B cell (primary cell): ENCODE measurements at regions of chr3 and their contacts with region 1.

Region 1: DNA sequence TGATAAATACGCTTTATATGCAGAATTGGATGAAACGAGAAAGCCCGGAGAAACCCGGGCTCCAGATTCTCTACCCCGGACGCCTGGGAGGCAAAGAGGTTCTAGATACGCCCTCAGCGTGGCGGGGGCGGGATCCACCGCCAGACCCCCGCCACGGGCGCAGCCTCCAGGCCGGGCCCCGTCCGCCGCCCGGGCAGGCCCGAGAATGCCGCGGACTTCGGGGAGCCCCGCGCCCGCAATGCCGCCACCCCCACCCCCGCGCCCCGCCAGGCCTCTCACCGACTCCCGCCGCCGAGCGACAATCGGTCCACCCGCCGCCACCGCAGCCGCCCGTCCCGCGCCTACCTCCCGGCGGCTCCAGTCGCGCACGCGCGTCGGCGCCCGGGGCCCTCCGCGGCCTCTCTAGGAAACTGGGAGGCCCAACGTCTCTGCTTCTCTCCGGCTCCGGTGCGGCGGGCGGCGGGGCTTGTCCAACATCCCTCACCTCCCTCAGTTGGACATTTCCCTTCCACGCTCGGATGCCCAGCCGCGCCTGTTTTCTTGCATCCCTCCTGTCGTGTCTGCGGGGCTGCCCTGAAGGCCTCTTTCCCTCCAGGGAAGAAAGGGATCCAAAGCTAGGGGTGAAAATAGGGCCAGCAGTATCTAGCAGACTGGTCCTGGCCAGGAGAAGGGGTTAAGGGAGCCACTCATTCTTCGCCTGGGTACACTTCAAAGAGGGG is at the start of gene ZNF445:
- DNase-seq: peak; percentile 85
- ATAC-seq: peak; percentile 91
- H3K4me3 ChIP-seq: peak within 1 kb of the TSS; percentile 47 to 90 (median 69)
- H3K4me3 Mint-ChIP-seq: peak within 1 kb of the TSS; percentile 94
- H3K27ac ChIP-seq: peak within 1 kb of the TSS in 1 of 2 donors; percentile 44
- H3K27ac Mint-ChIP-seq: peak within 1 kb of the TSS; percentile 89
- H3K4me1 ChIP-seq: peaks cover 11 to 18% of the 10 kb centered on the region in 2 donors
- H3K4me1 Mint-ChIP-seq: peaks cover 34% of the 10 kb centered on the region
- H3K27me3 ChIP-seq: no peaks in the 10 kb centered on the region
- H3K27me3 Mint-ChIP-seq: no peaks in the 10 kb centered on the region
- CTCF ChIP-seq: no peak
- total RNA-seq, gene ZNF445: 28.1 and 29.7 TPM in 2 replicates

Region 2: GRCh38 chr3:44338010-44338827 is 139.3 kb before region 1 on chr3 and contains the start of gene TCAIM:
- CTCF ChIA-PET with region 1: interaction called, 3 read pairs
- POLR2A ChIA-PET with region 1: no interaction called
- intact Hi-C with region 1: loop called (anchors 1 kb)
- DNase-seq: peak; percentile 100
- ATAC-seq: peak; percentile 90
- H3K4me3 ChIP-seq: peak within 1 kb of the TSS; percentile 85 to 97 (median 87)
- H3K4me3 Mint-ChIP-seq: peak within 1 kb of the TSS; percentile 99
- H3K27ac ChIP-seq: peak within 1 kb of the TSS; percentile 80 to 88
- H3K27ac Mint-ChIP-seq: peak within 1 kb of the TSS; percentile 99
- H3K4me1 ChIP-seq: peaks cover 16 to 19% of the 10 kb centered on the region in 2 donors
- H3K4me1 Mint-ChIP-seq: peaks cover 29% of the 10 kb centered on the region
- H3K27me3 ChIP-seq: no peaks in the 10 kb centered on the region
- H3K27me3 Mint-ChIP-seq: peaks cover 9% of the 10 kb centered on the region
- CTCF ChIP-seq: no peak
- total RNA-seq, gene TCAIM: 15.8 and 16.7 TPM in 2 replicates

Region 3: GRCh38 chr3:44439499-44440295 is 37.8 kb before region 1 on chr3:
- CTCF ChIA-PET with region 1: no interaction called
- POLR2A ChIA-PET with region 1: no interaction called
- intact Hi-C with region 1: loop called (anchors 2 kb)
- DNase-seq: peak; percentile 82
- ATAC-seq: peak; percentile 92
- H3K4me3 ChIP-seq: peak overlapping the region in 2 of 5 experiments; percentile 39 to 48
- H3K4me3 Mint-ChIP-seq: peak overlapping the region; percentile 68
- H3K27ac ChIP-seq: peak overlapping the region; percentile 62 to 84
- H3K27ac Mint-ChIP-seq: peak overlapping the region; percentile 83
- H3K4me1 ChIP-seq: peaks cover 17 to 20% of the 10 kb centered on the region in 2 donors
- H3K4me1 Mint-ChIP-seq: peaks cover 20% of the 10 kb centered on the region
- H3K27me3 ChIP-seq: no peaks in the 10 kb centered on the region
- H3K27me3 Mint-ChIP-seq: no peaks in the 10 kb centered on the region
- CTCF ChIP-seq: no peak

Region 4: GRCh38 chr3:44535364-44535763 is 57.9 kb after region 1 on chr3:
- CTCF ChIA-PET with region 1: no interaction called
- POLR2A ChIA-PET with region 1: no interaction called
- intact Hi-C with region 1: no loop called
- DNase-seq: no peak
- ATAC-seq: no peak
- H3K4me3 ChIP-seq: no peak overlapping the region
- H3K4me3 Mint-ChIP-seq: no peak overlapping the region
- H3K27ac ChIP-seq: no peak overlapping the region
- H3K27ac Mint-ChIP-seq: no peak overlapping the region
- H3K4me1 ChIP-seq: no peaks in the 10 kb centered on the region
- H3K4me1 Mint-ChIP-seq: no peaks in the 10 kb centered on the region
- H3K27me3 ChIP-seq: peaks cover 0 to 27% (median 9%) of the 10 kb centered on the region in 4 experiments
- H3K27me3 Mint-ChIP-seq: peaks cover 50% of the 10 kb centered on the region
- CTCF ChIP-seq: no peak

Region 5: DNA sequence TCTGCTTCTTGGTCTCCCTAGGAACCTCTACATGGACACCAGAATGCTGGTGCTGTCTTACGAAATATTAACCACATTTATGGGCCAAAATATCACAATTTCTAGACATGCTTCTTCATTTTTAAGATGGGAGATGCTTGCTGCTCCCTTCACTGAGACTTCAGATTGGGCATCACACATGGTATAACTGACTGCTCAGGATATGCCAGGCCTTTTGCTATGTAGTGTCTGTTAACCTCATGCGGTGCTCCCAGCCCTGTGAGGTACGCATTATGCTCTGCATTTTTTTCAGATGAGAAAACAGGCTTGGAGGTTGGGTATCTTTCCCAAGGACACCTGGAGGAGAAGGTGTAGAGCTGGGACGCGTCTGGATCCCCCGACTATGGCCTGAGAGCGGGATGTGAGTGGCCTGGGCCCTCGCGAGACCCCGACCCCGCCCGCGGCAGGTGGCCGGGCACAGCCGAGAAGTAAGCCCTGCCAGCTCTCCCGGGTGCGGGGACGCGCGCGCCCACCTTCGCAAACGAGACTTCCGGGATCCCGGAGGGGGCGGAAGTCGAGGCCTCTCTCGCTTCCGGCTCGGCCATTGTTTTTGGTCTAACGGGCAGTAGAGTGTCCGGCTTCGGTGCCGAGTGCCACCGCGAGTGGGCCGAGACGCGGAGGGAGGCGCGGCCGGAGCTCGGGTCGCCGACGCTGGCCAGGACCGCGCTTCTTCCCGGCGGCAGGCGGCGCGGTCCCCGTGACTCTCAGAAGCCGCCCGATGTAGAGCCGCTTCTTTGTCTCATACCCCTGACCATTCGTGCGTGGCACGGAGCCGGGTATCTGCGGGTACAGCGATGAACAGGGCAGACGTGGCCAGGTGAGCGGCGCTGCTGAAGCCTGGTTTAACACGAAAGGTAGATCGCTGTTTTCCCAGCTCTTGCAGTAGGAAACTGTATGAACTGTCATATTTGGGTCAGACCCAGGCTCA is 77.4 kb after region 1 on chr3 and contains the start of gene ZKSCAN7:
- CTCF ChIA-PET with region 1: no interaction called
- POLR2A ChIA-PET with region 1: no interaction called
- intact Hi-C with region 1: loop called (anchors 1 kb)
- DNase-seq: peak; percentile 74
- ATAC-seq: peak; percentile 74
- H3K4me3 ChIP-seq: peak within 1 kb of the TSS; percentile 49 to 91 (median 79)
- H3K4me3 Mint-ChIP-seq: peak within 1 kb of the TSS; percentile 90
- H3K27ac ChIP-seq: peak within 1 kb of the TSS; percentile 40 to 79
- H3K27ac Mint-ChIP-seq: peak within 1 kb of the TSS; percentile 83
- H3K4me1 ChIP-seq: peaks cover 13 to 16% of the 10 kb centered on the region in 2 donors
- H3K4me1 Mint-ChIP-seq: peaks cover 24% of the 10 kb centered on the region
- H3K27me3 ChIP-seq: peaks cover 0 to 2% (median 0%) of the 10 kb centered on the region in 4 experiments
- H3K27me3 Mint-ChIP-seq: peaks cover 7% of the 10 kb centered on the region
- CTCF ChIP-seq: peak; percentile 10
- total RNA-seq, gene ZKSCAN7: 8.0 and 8.5 TPM in 2 replicates

Region 6: GRCh38 chr3:44648564-44649229 is 171.2 kb after region 1 on chr3 and contains the start of gene ZNF35:
- CTCF ChIA-PET with region 1: no interaction called
- POLR2A ChIA-PET with region 1: no interaction called
- intact Hi-C with region 1: loop called (anchors 1 kb)
- DNase-seq: peak; percentile 67
- ATAC-seq: peak; percentile 84
- H3K4me3 ChIP-seq: peak within 1 kb of the TSS; percentile 43 to 95 (median 86)
- H3K4me3 Mint-ChIP-seq: peak within 1 kb of the TSS; percentile 96
- H3K27ac ChIP-seq: peak within 1 kb of the TSS; percentile 27 to 74
- H3K27ac Mint-ChIP-seq: peak within 1 kb of the TSS; percentile 80
- H3K4me1 ChIP-seq: peaks cover 8 to 15% of the 10 kb centered on the region in 2 donors
- H3K4me1 Mint-ChIP-seq: peaks cover 23% of the 10 kb centered on the region
- H3K27me3 ChIP-seq: no peaks in the 10 kb centered on the region
- H3K27me3 Mint-ChIP-seq: no peaks in the 10 kb centered on the region
- CTCF ChIP-seq: no peak
- total RNA-seq, gene ZNF35: 12.1 and 16.6 TPM in 2 replicates

Region 7: GRCh38 chr3:44685128-44685800 is 207.8 kb after region 1 on chr3:
- CTCF ChIA-PET with region 1: no interaction called
- POLR2A ChIA-PET with region 1: no interaction called
- intact Hi-C with region 1: loop called (anchors 1 kb)
- DNase-seq: peak; percentile 85
- ATAC-seq: peak; percentile 86
- H3K4me3 ChIP-seq: peak overlapping the region; percentile 46 to 72 (median 70)
- H3K4me3 Mint-ChIP-seq: peak overlapping the region; percentile 91
- H3K27ac ChIP-seq: peak overlapping the region in 1 of 2 donors; percentile 78
- H3K27ac Mint-ChIP-seq: peak overlapping the region; percentile 69
- H3K4me1 ChIP-seq: peaks cover 11% of the 10 kb centered on the region in 2 donors
- H3K4me1 Mint-ChIP-seq: peaks cover 21% of the 10 kb centered on the region
- H3K27me3 ChIP-seq: peaks cover 0 to 17% (median 8%) of the 10 kb centered on the region in 4 experiments
- H3K27me3 Mint-ChIP-seq: peaks cover 20% of the 10 kb centered on the region
- CTCF ChIP-seq: no peak

Region 8: DNA sequence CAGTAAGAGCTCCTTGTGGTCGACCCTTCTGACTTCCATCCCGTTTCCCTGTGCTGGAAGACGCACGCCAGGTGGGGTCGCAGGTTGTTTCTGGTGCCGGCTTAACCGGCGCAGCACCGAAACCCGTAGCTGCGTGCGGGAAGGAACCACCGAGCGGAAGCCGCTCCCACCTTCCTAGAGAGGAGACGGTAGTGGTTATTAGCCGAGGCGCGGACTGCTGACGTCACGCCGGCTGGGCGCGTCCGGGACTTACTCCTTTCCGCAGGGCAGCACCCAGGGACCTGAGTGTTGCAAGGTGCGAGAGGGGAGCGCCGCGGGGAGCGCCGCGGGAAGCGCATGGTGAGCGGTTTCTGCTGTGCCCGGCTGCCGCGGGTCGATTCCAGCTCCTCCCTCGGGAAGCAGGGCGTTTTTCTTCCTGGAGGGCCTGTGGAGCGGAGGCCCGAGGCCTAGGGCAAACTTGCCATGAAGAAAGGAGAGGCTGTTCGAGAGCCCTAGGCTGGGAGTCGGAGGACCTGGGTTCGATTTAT is 252.0 kb after region 1 on chr3 and contains the start of gene ZNF501:
- CTCF ChIA-PET with region 1: no interaction called
- POLR2A ChIA-PET with region 1: no interaction called
- intact Hi-C with region 1: loop called (anchors 1 kb)
- DNase-seq: peak; percentile 90
- ATAC-seq: peak; percentile 94
- H3K4me3 ChIP-seq: peak within 1 kb of the TSS; percentile 35 to 89 (median 77)
- H3K4me3 Mint-ChIP-seq: peak within 1 kb of the TSS; percentile 96
- H3K27ac ChIP-seq: peak within 1 kb of the TSS; percentile 15 to 32
- H3K27ac Mint-ChIP-seq: peak within 1 kb of the TSS; percentile 86
- H3K4me1 ChIP-seq: peaks cover 6 to 12% of the 10 kb centered on the region in 2 donors
- H3K4me1 Mint-ChIP-seq: peaks cover 13% of the 10 kb centered on the region
- H3K27me3 ChIP-seq: no peaks in the 10 kb centered on the region
- H3K27me3 Mint-ChIP-seq: no peaks in the 10 kb centered on the region
- CTCF ChIP-seq: no peak
- total RNA-seq, gene ZNF501: 6.1 and 7.2 TPM in 2 replicates